GM12878 (cell line): ENCODE measurements at regions of chr2 and their contacts with region 1.

Region 1: DNA sequence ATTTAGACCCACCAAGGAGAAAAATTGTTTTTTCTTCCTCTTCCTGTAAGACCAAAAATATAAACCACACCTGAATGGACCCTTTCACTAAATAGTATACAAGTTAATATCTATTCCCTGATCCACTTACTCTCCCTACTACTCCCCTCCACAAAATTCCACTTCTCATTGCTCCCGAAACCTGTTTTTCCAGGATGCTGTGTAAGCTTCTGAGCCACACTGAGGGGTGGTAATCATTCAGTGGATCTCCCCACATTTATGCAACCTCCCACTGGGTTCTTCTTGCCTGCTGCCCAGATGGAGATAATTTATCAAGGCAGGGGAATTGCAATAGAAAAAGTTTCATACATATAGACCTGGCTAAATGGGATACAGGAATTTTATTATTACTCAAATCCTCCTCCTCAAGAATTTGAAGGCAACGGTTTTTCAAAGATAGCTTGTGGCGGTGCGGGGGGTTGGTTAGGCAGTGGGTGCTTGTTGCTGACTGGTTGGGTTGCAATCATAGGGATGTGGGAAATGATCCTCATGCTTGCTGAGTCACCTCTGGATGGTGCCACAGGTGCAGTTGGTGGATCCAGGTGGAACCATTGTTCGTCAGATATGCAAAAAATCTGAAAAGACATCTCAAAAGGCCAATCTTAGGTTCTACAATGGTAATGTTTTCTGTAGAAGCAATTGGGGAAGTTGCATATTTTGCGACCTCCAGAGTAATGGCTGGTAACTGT is 970.3 kb downstream of the CNTNAP5 start:
- DNase-seq: no peak
- ATAC-seq: no peak
- H3K4me3 ChIP-seq: no peak overlapping the region
- H3K27ac ChIP-seq: no peak overlapping the region
- H3K4me1 ChIP-seq: no peaks in the 10 kb centered on the region
- H3K27me3 ChIP-seq: no peaks in the 10 kb centered on the region
- CTCF ChIP-seq: no peak
- EP300 ChIP-seq: no peak
- POLR2A ChIP-seq: no peak
- RAD21 ChIP-seq: no peak

Region 2: GRCh38 chr2:125041846-125042245 is 46.5 kb after region 1 on chr2:
- CTCF ChIA-PET with region 1: no interaction called
- POLR2A ChIA-PET with region 1: no interaction called
- RAD21 ChIA-PET with region 1: no interaction called
- SMC1A ChIA-PET with region 1: no interaction called
- in situ Hi-C with region 1: loop called (anchors 5 kb)
- intact Hi-C with region 1: no loop called
- DNase-seq: no peak
- ATAC-seq: no peak
- H3K4me3 ChIP-seq: no peak overlapping the region
- H3K27ac ChIP-seq: no peak overlapping the region
- H3K4me1 ChIP-seq: no peaks in the 10 kb centered on the region
- H3K27me3 ChIP-seq: no peaks in the 10 kb centered on the region
- CTCF ChIP-seq: no peak
- EP300 ChIP-seq: no peak
- POLR2A ChIP-seq: no peak
- RAD21 ChIP-seq: no peak